Naive thymus-derived CD4-positive, alpha-beta T cell (primary cell): ENCODE measurements at regions of chr4 and their contacts with region 1.

Region 1: GRCh38 chr4:140861359-140862176 is 105.4 kb upstream of the TBC1D9 start:
- DNase-seq: peak in 6 of 9 donors; percentile 4 to 49 (median 36)
- ATAC-seq: peak; percentile 66
- H3K4me3 ChIP-seq: no peak overlapping the region
- H3K4me3 Mint-ChIP-seq: no peak overlapping the region
- H3K27ac ChIP-seq: no peak overlapping the region
- H3K27ac Mint-ChIP-seq: no peak overlapping the region
- H3K4me1 ChIP-seq: no peaks in the 10 kb centered on the region
- H3K4me1 Mint-ChIP-seq: peaks cover 0 to 14% (median 5%) of the 10 kb centered on the region in 7 donors
- H3K27me3 ChIP-seq: no peaks in the 10 kb centered on the region
- H3K27me3 Mint-ChIP-seq: peaks cover 18 to 28% (median 23%) of the 10 kb centered on the region in 5 donors

Region 2: DNA sequence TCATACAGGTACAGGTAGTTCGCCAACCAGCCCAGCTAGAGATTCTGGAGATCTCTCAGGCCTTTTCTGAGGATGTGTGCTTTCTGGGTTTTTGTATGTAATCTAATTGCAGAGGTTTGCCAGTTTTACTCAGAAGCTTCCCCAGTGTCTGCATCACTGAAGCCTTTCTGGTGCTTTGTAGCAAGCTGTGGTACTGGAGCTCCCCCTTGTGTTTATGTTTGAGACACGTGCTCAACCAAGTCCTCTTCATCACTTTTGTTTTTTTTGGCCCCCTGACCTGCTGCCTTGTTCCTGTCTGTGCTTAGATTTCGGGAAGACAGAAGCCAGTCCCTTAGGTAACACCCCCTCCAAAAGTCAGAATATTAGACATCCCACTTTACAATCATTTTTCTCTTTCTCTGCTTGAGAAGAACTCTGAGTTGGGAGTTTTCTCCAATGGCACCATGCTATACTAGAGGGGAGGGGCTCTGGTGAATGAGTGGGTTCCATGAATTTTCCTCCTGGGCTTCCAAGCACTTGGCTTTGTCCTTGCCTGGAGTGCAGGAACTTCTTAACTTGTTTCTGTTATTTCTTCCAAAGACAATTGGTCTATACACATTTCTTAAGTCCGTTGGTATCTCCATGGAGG is 23.0 kb after region 1 on chr4:
- CTCF ChIA-PET with region 1: no interaction called
- POLR2A ChIA-PET with region 1: no interaction called
- intact Hi-C with region 1: loop called in 1 of 2 experiments (anchors 1 kb)
- DNase-seq: peak in 2 of 9 donors; percentile 1 to 22
- ATAC-seq: peak; percentile 66
- H3K4me3 ChIP-seq: no peak overlapping the region
- H3K4me3 Mint-ChIP-seq: no peak overlapping the region
- H3K27ac ChIP-seq: no peak overlapping the region
- H3K27ac Mint-ChIP-seq: no peak overlapping the region
- H3K4me1 ChIP-seq: no peaks in the 10 kb centered on the region
- H3K4me1 Mint-ChIP-seq: peaks cover 0 to 3% (median 0%) of the 10 kb centered on the region in 7 donors
- H3K27me3 ChIP-seq: no peaks in the 10 kb centered on the region
- H3K27me3 Mint-ChIP-seq: peaks cover 0 to 15% (median 8%) of the 10 kb centered on the region in 5 donors

Region 3: DNA sequence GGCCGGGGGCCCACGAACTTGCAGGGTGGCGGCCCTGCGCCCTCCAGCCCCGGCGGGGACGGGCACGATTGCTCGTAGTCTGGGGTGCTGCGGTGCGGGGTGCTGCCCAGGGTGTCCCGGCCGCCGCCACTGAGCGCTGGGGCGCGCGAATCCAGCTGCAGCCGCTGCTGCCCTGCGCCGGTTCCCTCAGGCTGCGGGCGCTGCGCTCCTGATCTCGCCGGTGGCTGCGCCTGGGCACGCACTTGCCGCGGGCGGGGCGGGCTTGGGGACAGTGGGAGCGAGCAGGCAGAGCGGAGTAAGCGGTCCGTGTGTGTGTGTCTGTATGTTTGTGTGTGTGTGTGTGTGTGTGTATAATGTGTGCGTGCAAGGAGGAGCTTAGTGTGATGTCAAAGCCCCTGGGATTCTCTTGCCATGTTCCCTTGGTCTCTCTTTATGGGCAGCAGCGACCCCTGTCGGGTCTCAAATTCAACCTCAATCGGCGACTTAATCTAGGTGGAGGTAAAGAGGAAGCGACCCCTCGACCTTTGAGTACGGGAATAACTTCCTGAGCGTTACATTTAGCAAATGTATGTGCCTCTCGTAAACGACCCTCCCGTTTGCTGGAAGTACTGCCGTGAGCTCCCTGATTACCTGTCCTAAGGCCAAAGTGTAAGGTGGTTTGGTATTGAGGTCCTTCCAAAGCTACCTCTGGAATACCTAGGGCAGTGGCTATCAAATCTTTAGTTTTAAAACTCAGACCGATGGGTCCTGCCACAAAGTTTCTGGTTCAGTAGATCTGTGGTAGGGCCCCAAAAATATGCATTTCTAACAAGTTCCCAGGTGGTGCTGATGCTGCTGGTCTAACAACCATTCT is 271.8 kb after region 1 on chr4 and contains the start of gene RNF150:
- CTCF ChIA-PET with region 1: no interaction called
- POLR2A ChIA-PET with region 1: no interaction called
- intact Hi-C with region 1: loop called (anchors 1 kb)
- DNase-seq: peak in 7 of 9 donors; percentile 7 to 39 (median 9)
- ATAC-seq: peak; percentile 60
- H3K4me3 ChIP-seq: peak within 1 kb of the TSS; percentile 26
- H3K4me3 Mint-ChIP-seq: peak within 1 kb of the TSS; percentile 80 to 94 (median 88)
- H3K27ac ChIP-seq: no peak within 1 kb of the TSS
- H3K27ac Mint-ChIP-seq: peak within 1 kb of the TSS in 1 of 9 donors; percentile 40
- H3K4me1 ChIP-seq: no peaks in the 10 kb centered on the region
- H3K4me1 Mint-ChIP-seq: peaks cover 0 to 20% (median 13%) of the 10 kb centered on the region in 7 donors
- H3K27me3 ChIP-seq: no peaks in the 10 kb centered on the region
- H3K27me3 Mint-ChIP-seq: peaks cover 67 to 81% (median 72%) of the 10 kb centered on the region in 5 donors
- total RNA-seq, gene RNF150: 0.02 TPM in 1 of 5 experiments, not detected in the others